Pancreas (tissue), 10 donors: ENCODE measurements at regions of chr20 and their contacts with region 1.

Region 1: DNA sequence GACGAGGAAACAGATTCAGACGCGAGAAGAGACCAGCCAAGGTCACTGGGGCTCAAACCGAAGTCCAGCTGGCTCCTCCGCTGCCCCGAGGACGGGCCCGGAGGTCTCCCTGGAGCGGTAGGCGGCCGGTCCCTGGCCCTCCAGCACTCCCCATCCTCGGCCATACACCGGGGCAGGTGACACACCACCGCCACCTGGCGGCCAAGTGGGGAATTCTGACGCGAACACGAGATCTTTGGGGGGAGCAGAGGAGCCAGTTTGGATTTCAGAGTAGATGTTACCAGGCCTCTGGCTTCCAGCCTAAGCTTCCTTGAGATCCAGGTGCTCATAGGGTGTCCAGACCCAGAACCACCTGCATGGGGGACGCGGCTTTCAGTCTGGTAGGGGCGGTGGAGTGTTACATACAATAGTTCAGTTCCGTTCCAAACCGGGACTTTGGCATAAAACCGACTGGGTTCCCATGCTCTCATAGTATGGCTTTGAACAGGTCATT is 16.1 kb downstream of the BPIFB1 start:
- DNase-seq: peak; percentile 32 to 91 (median 72)
- ATAC-seq: peak; percentile 46 to 92 (median 92)
- H3K4me3 ChIP-seq: no peak overlapping the region
- H3K27ac ChIP-seq: no peak overlapping the region
- H3K4me1 ChIP-seq: no peaks in the 10 kb centered on the region
- H3K27me3 ChIP-seq: no peaks in the 10 kb centered on the region
- CTCF ChIP-seq: peak; percentile 77 to 91 (median 90)

Region 2: DNA sequence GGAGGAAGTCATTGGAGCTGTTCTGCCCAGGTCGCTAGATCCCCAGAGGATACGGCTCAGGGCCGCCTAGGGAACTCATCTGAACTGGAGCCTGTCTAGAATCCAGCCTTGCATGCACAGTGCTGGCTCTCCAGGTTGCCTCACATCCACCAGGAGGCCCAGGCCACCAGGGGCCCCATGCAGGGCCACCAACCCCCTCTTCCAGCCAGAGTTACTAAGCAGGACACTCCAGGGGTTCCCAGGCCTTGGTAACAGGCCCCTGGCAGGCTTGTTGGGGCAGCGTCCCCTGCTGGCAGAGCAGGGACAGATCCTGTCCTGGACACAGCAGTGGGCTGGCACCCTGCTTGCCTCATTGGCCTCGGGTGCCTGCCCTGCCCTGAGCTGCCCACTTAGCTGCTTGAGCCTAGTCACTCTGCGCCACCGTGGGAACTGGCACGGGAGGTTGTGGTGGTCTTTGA is 405.1 kb before region 1 on chr20:
- intact Hi-C with region 1: loop called in 2 of 3 experiments (anchors 5 to 10 kb)
- DNase-seq: peak in 1 of 6 donors; percentile 32
- ATAC-seq: peak in 3 of 4 donors; percentile 39 to 55 (median 42)
- H3K4me3 ChIP-seq: no peak overlapping the region
- H3K27ac ChIP-seq: no peak overlapping the region
- H3K4me1 ChIP-seq: no peaks in the 10 kb centered on the region
- H3K27me3 ChIP-seq: no peaks in the 10 kb centered on the region
- CTCF ChIP-seq: no peak

Region 3: GRCh38 chr20:32902456-32903420 is 396.4 kb before region 1 on chr20:
- intact Hi-C with region 1: loop called (anchors 5 to 10 kb)
- DNase-seq: peak in 5 of 6 donors; percentile 21 to 72 (median 47)
- ATAC-seq: peak; percentile 66 to 94 (median 89)
- H3K4me3 ChIP-seq: no peak overlapping the region
- H3K27ac ChIP-seq: no peak overlapping the region
- H3K4me1 ChIP-seq: no peaks in the 10 kb centered on the region
- H3K27me3 ChIP-seq: no peaks in the 10 kb centered on the region
- CTCF ChIP-seq: peak; percentile 76 to 89 (median 84)

Region 4: GRCh38 chr20:33370296-33370695 is 71.1 kb after region 1 on chr20:
- intact Hi-C with region 1: no loop called
- DNase-seq: no peak
- ATAC-seq: peak in 2 of 4 donors; percentile 9 to 39
- H3K4me3 ChIP-seq: no peak overlapping the region
- H3K27ac ChIP-seq: no peak overlapping the region
- H3K4me1 ChIP-seq: no peaks in the 10 kb centered on the region
- H3K27me3 ChIP-seq: no peaks in the 10 kb centered on the region
- CTCF ChIP-seq: no peak